ENCODE measurements at regions of chr7 and their contacts with region 1.

Region 1: GRCh38 chr7:48109848-48110663 is 21.0 kb downstream of the UPP1 start:
- DNase-seq: peak; percentile 91
- ATAC-seq: peak; percentile 95
- H3K4me3 Mint-ChIP-seq: no peak overlapping the region
- H3K27ac Mint-ChIP-seq: peak overlapping the region; percentile 67
- H3K4me1 Mint-ChIP-seq: peaks cover 21% of the 10 kb centered on the region
- H3K27me3 Mint-ChIP-seq: no peaks in the 10 kb centered on the region

Region 2: GRCh38 chr7:47950728-47951127 is 159.3 kb before region 1 on chr7:
- CTCF ChIA-PET with region 1: interaction called, 88 read pairs
- POLR2A ChIA-PET with region 1: no interaction called
- DNase-seq: no peak
- ATAC-seq: no peak
- H3K4me3 Mint-ChIP-seq: no peak overlapping the region
- H3K27ac Mint-ChIP-seq: no peak overlapping the region
- H3K4me1 Mint-ChIP-seq: no peaks in the 10 kb centered on the region
- H3K27me3 Mint-ChIP-seq: no peaks in the 10 kb centered on the region

Region 3: DNA sequence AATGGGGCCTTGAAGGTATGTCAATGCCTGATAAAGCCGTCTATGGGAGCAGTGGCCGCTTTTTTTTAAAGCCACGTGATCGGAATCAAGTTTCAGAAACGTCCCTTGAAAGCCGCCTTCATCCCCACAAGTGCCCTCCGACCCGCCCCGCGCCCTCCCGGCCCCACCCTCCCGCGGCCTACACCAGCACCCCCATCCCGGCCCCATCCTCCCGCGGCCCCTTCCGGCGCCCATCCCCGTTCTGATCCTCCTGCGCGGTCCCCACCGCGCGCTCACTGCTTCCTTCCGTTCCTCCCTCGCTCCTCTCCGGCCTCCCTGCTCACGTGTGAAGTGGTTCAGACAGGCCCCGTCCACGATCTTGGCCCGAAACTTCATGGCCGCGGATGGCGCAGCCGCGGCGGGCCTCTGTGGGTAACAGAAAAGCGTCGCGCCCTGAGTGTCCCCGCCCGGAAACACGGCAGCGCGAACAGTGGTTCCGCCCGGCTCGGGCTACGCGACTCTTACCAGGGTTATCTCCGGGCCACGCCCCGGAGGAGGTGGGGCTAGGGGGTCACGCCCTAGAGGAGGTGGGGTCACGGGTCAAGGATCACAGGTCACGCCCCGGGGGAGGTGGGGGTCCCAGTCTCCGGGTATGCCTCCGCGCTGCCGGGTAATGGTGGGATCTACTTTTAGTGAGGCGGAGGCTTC is 130.8 kb before region 1 on chr7 and contains the start of gene HUS1:
- CTCF ChIA-PET with region 1: interaction called, 17 read pairs
- POLR2A ChIA-PET with region 1: no interaction called
- DNase-seq: peak; percentile 95
- ATAC-seq: peak; percentile 96
- H3K4me3 Mint-ChIP-seq: peak within 1 kb of the TSS; percentile 87
- H3K27ac Mint-ChIP-seq: peak within 1 kb of the TSS; percentile 98
- H3K4me1 Mint-ChIP-seq: peaks cover 26% of the 10 kb centered on the region
- H3K27me3 Mint-ChIP-seq: no peaks in the 10 kb centered on the region
- total RNA-seq, gene HUS1: 28.9 to 31.6 TPM

Region 4: DNA sequence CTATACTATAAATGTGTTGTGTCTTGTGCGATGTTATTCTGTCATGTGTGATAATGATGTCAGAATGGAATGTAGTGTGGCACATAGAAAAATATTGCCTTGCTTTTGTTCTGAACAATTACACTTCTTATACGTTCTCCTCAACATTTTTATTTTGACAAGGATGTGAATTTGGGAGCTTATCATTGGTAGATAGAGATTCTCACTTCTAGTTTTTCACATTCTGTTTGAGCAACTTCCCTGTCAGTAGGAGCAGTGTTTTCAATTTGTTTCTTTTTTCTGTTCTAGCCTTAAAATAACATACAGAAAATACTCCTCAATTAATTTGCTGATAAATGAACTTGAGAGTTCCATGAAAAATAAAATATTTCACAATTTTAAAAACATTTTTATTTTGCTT is 98.7 kb before region 1 on chr7:
- CTCF ChIA-PET with region 1: no interaction called
- POLR2A ChIA-PET with region 1: no interaction called
- DNase-seq: no peak
- ATAC-seq: no peak
- H3K4me3 Mint-ChIP-seq: no peak overlapping the region
- H3K27ac Mint-ChIP-seq: no peak overlapping the region
- H3K4me1 Mint-ChIP-seq: no peaks in the 10 kb centered on the region
- H3K27me3 Mint-ChIP-seq: no peaks in the 10 kb centered on the region

Region 5: DNA sequence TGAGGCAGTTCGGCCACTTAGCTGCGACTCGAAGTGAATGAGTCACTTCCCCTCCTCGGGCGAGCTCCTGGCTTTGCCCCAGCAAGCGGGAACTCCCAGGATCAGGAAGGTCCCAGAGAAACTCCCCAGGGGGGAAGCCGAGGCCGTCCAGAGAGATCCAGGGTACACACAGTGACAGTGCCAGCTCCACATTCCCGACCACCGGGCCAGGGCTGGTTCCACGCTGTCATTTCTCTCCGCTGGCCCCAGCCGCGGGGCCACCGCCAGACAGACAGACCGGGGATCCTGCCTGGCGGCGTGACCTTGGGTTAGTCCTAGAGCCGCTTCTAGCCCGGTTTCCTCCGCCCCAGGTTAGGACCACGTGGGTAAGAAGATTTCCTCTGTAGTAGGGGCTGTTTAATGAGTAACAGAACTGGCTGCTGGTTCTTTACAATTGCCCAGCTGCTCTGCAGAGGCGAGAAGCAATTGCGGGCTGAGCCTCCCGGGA is 21.5 kb before region 1 on chr7:
- CTCF ChIA-PET with region 1: interaction called, 17 read pairs
- POLR2A ChIA-PET with region 1: interaction called, 3 read pairs
- DNase-seq: no peak
- ATAC-seq: peak; percentile 73
- H3K4me3 Mint-ChIP-seq: peak overlapping the region; percentile 86
- H3K27ac Mint-ChIP-seq: peak overlapping the region; percentile 90
- H3K4me1 Mint-ChIP-seq: peaks cover 78% of the 10 kb centered on the region
- H3K27me3 Mint-ChIP-seq: no peaks in the 10 kb centered on the region